ENCODE measurements at regions of chr3 and their contacts with region 1.

Region 1: GRCh38 chr3:170908235-170909116 is at the start of gene EIF5A2:
- DNase-seq: peak; percentile 91 to 98 (median 94)
- H3K4me3 ChIP-seq: peak within 1 kb of the TSS; percentile 46
- H3K4me3 Mint-ChIP-seq: peak within 1 kb of the TSS; percentile 93 to 98 (median 95)
- H3K27ac ChIP-seq: peak within 1 kb of the TSS; percentile 58
- H3K27ac Mint-ChIP-seq: peak within 1 kb of the TSS; percentile 83 to 99 (median 98)
- H3K4me1 ChIP-seq: peaks cover 13% of the 10 kb centered on the region
- H3K4me1 Mint-ChIP-seq: peaks cover 19 to 34% (median 28%) of the 10 kb centered on the region in 3 donors
- H3K27me3 ChIP-seq: no peaks in the 10 kb centered on the region
- H3K27me3 Mint-ChIP-seq: peaks cover 0 to 1% of the 10 kb centered on the region in 2 donors
- total RNA-seq, gene EIF5A2: 10.8 to 12.4 TPM

Region 2: DNA sequence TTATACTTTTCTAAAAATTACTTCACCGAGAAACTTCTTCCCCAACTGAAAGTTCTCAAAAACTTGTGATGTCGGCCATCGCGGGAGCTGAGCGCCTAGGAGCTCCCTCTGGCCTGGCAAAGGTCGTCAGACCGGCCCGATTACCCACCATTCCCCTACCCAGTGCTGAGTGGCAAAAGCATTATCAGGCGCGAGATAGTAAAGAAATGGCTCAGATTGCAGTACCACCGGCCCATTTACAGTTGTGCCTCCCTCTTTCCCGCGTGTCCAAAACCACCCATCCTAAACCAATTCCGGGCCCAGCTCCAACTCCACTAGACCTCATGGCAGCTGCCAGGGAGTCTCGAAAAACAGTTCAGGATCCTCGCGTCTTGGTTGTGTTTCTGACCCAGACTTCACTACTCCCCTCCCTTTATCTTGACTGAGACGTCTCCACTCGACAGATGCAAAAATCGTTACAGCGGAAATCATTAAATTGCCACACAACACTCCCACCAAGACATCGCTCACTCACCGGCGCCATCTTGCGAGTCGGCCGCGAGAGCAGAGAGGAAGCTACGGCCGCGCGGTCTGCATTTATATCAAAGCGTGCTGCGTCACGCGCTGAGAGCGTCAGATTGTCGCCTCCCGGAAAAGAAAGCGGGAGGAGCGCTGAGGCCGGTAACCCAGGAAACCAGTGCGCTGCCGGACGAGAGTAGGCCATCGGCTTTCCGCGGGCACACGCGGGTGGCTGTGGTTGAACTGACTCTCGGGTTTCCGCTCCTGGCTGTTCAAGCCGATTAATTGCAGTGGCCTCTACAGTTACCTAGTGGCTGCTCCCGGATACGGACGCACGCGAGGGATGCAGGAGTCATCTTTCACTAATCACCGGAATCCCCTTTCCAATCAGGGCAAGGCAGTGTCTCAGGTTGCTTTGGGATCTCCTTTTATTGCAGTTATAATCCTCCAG is 38.6 kb before region 1 on chr3 and contains the start of gene RPL22L1:
- CTCF ChIA-PET with region 1: interaction called, 4 read pairs
- POLR2A ChIA-PET with region 1: interaction called, 26 read pairs
- DNase-seq: peak; percentile 85 to 96 (median 91)
- H3K4me3 ChIP-seq: peak within 1 kb of the TSS; percentile 96
- H3K4me3 Mint-ChIP-seq: peak within 1 kb of the TSS; percentile 88 to 98 (median 96)
- H3K27ac ChIP-seq: peak within 1 kb of the TSS; percentile 94
- H3K27ac Mint-ChIP-seq: peak within 1 kb of the TSS; percentile 88 to 99 (median 98)
- H3K4me1 ChIP-seq: peaks cover 33% of the 10 kb centered on the region
- H3K4me1 Mint-ChIP-seq: peaks cover 30 to 46% (median 42%) of the 10 kb centered on the region in 3 donors
- H3K27me3 ChIP-seq: no peaks in the 10 kb centered on the region
- H3K27me3 Mint-ChIP-seq: no peaks in the 10 kb centered on the region
- total RNA-seq, gene RPL22L1: 217 to 228 TPM

Measured in CD8-positive, alpha-beta memory T cell (primary cell).